ENCODE measurements at regions of chr1 and their contacts with region 1.

Region 1: GRCh38 chr1:6646499-6647148 is 22.0 kb downstream of the THAP3 start:
- DNase-seq: no peak
- H3K4me3 Mint-ChIP-seq: no peak overlapping the region
- H3K27ac Mint-ChIP-seq: no peak overlapping the region
- H3K4me1 Mint-ChIP-seq: no peaks in the 10 kb centered on the region
- H3K27me3 Mint-ChIP-seq: no peaks in the 10 kb centered on the region
- CTCF ChIP-seq: peak; percentile 6

Region 2: DNA sequence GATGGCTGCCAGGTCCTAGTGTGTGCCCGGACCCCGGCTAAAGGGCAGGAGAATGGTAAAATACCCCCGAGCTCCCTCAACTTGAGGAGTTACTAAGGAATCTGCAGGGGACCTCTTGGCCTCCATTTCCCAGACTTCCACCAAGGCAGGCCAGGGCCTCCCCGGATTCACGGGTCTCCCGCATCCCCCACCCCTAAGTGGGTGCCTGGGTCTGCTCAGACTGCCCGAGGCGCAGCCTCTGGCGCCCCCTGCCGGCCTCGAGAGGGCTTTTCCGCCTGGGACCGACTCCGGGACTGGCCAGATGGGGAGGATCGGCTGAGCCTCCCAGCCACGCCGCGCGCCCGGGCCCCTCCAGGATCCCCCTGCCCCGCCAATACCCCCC is 156.8 kb before region 1 on chr1:
- CTCF ChIA-PET with region 1: no interaction called
- intact Hi-C with region 1: loop called (anchors 5 kb)
- DNase-seq: peak; percentile 76
- H3K4me3 Mint-ChIP-seq: peak overlapping the region; percentile 72
- H3K27ac Mint-ChIP-seq: no peak overlapping the region
- H3K4me1 Mint-ChIP-seq: peaks cover 10% of the 10 kb centered on the region
- H3K27me3 Mint-ChIP-seq: peaks cover 51% of the 10 kb centered on the region
- CTCF ChIP-seq: peak; percentile 91